Lower leg skin (tissue), 4 donors: ENCODE measurements at regions of chr6 and their contacts with region 1.

Region 1: DNA sequence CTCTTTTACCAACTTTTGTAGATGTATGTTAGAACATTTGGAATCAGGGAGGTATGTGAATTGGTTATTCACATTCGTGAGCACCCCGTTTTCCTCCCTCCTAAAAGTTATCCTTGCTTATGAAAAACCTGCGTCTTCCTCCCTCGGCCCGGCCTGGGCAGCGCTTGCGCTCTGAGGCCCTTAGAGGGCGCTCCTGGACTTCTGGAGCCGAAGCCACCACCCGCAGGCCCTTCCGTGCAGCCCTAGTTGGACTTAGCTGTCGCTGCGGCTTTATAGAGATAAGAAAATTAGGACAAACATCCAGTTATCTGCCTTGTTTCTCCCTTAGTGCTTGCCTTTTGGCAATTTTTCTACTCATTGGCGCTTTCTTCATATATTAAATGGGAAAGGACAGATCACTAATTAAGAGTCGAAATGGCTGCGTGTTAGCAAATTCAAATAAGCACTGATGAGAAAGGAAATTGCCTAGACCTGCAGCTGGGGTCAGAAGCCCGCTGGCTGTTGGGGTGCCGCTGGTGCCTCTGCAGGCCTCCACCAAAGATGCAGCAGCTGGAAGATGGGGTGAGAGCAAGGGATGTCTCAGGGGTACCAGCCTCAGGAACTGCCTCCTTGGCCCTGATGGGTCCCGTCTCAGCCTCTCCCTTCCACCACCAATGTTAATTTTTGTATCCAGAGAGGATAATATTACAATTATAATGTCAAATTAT is 5.2 kb downstream of the FNDC1 start:
- DNase-seq: peak; percentile 51 to 94
- H3K4me3 ChIP-seq: no peak overlapping the region
- CTCF ChIP-seq: peak in 1 of 3 donors; percentile 83
- POLR2A ChIP-seq: no peak

Region 2: DNA sequence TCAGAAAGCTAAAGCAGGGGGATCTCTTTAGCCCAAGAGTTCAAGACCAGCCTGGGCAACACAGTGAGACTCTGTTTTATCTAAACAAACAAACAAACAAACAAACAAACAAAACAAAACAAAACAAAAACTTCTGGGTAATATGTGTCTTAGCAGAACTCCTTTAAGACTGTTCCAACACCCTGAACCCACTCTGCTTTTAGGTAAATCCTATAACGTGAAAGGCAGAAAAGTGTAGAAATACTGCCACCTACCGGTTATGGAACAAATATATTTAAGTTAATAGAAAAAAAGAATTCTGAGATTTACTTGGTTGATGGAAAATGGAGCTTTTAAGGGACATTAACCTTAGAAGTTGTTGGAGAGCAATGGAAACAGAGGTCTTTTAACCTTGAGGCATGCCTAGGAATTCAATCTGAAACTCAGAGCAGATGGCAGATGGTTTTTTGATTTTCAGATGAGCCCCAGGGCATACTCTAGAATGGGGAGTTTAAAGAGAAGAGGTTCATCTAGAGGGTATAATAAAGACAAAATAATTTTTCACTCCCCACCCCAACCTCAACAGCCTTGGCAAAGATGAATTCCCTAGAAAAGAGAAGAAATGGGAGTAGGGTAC is 480.2 kb after region 1 on chr6:
- intact Hi-C with region 1: loop called (anchors 10 kb)
- DNase-seq: no peak
- H3K4me3 ChIP-seq: no peak overlapping the region
- CTCF ChIP-seq: no peak
- POLR2A ChIP-seq: no peak